ENCODE measurements at regions of chr6 and their contacts with region 1.

Region 1: GRCh38 chr6:121531658-121532169 is 96.3 kb downstream of the GJA1 start:
- DNase-seq: no peak
- ATAC-seq: no peak
- H3K4me3 ChIP-seq: no peak overlapping the region
- H3K27ac ChIP-seq: no peak overlapping the region
- H3K4me1 ChIP-seq: no peaks in the 10 kb centered on the region
- H3K27me3 ChIP-seq: no peaks in the 10 kb centered on the region
- CTCF ChIP-seq: no peak
- EP300 ChIP-seq: no peak
- POLR2A ChIP-seq: no peak
- RAD21 ChIP-seq: no peak

Region 2: GRCh38 chr6:121634616-121635015 is 102.9 kb after region 1 on chr6:
- CTCF ChIA-PET with region 1: no interaction called
- POLR2A ChIA-PET with region 1: no interaction called
- in situ Hi-C with region 1: no loop called
- intact Hi-C with region 1: loop called (anchors 1 kb)
- DNase-seq: no peak
- ATAC-seq: no peak
- H3K4me3 ChIP-seq: no peak overlapping the region
- H3K27ac ChIP-seq: no peak overlapping the region
- H3K4me1 ChIP-seq: no peaks in the 10 kb centered on the region
- H3K27me3 ChIP-seq: no peaks in the 10 kb centered on the region
- CTCF ChIP-seq: no peak
- EP300 ChIP-seq: no peak
- POLR2A ChIP-seq: no peak
- RAD21 ChIP-seq: no peak

Measured in HepG2 (cell line).